ENCODE measurements at regions of chr2 and their contacts with region 1.

Region 1: DNA sequence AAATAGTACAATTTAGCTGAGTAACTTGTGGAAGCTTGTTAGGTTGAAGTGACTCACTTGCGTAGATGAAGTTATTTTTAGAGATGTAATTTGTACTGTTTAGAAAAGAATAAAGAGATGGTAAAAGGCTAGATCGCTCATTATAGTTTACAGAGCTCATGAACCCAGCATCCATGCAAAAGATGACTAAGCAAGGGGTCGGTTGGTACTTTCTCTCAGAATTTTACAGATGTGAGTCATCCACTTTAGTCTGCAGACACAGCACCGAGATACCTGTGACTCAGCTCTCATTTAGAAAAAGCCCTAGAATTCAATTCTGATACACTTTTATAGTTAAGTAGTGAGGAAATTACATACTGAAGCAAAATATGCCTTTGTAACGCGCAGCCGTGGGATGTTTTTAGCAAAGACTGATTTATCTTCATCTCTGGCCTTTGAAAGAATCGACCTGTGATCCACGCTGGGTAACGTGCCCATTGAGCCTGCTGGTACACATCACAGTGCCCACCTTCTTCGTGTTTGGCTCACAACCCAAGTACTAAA is 116.5 kb upstream of the FOSL2 start:
- DNase-seq: no peak
- ATAC-seq: peak; percentile 37 to 47
- H3K4me3 ChIP-seq: no peak overlapping the region
- H3K27ac ChIP-seq: peak overlapping the region; percentile 67 to 85 (median 68)
- H3K4me1 ChIP-seq: peaks cover 27 to 41% of the 10 kb centered on the region in 2 donors
- H3K27me3 ChIP-seq: no peaks in the 10 kb centered on the region
- CTCF ChIP-seq: no peak
- POLR2A ChIP-seq: no peak

Region 2: DNA sequence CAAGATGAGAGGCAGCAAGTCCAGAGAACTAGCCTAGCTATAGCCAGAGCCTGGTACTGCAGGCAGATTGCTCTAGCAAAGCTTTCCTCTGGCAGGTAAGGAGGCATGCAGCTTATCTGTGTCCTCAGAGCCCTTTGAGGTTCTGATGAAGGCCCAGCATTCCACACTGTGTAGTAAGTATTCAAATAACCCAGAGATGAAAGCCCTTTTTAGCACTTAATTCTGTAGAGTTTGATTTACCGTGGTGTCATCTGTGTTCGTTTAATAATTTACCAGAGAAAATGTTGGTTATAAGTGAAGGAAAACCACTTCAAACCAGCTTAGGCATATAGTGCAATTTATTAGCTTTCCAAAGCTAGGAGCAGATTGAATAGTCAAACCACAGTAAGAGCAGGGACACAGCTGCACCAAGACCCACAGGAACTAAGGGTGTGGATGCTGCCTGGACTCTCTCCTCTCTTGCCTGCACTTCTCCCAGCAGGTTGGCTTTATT is 159.0 kb before region 1 on chr2:
- in situ Hi-C with region 1: no loop called
- intact Hi-C with region 1: no loop called
- DNase-seq: no peak
- ATAC-seq: no peak
- H3K4me3 ChIP-seq: no peak overlapping the region
- H3K27ac ChIP-seq: no peak overlapping the region
- H3K4me1 ChIP-seq: peaks cover 21 to 27% of the 10 kb centered on the region in 2 donors
- H3K27me3 ChIP-seq: no peaks in the 10 kb centered on the region
- CTCF ChIP-seq: no peak
- POLR2A ChIP-seq: no peak

Region 3: GRCh38 chr2:28164280-28164801 is 111.8 kb before region 1 on chr2:
- in situ Hi-C with region 1: no loop called
- intact Hi-C with region 1: loop called (anchors 5 kb)
- DNase-seq: peak; percentile 68 to 88
- ATAC-seq: peak; percentile 81 to 86
- H3K4me3 ChIP-seq: peak overlapping the region in 3 of 4 donors; percentile 17 to 25 (median 24)
- H3K27ac ChIP-seq: peak overlapping the region; percentile 89 to 96 (median 92)
- H3K4me1 ChIP-seq: peaks cover 36 to 61% of the 10 kb centered on the region in 2 donors
- H3K27me3 ChIP-seq: no peaks in the 10 kb centered on the region
- CTCF ChIP-seq: no peak
- POLR2A ChIP-seq: peak in 1 of 2 donors; percentile 50

Region 4: GRCh38 chr2:28201671-28202180 is 74.4 kb before region 1 on chr2:
- in situ Hi-C with region 1: no loop called
- intact Hi-C with region 1: loop called (anchors 2 kb)
- DNase-seq: peak; percentile 85 to 93
- ATAC-seq: peak; percentile 92 to 94
- H3K4me3 ChIP-seq: no peak overlapping the region
- H3K27ac ChIP-seq: peak overlapping the region; percentile 75 to 87 (median 82)
- H3K4me1 ChIP-seq: peaks cover 25 to 38% of the 10 kb centered on the region in 2 donors
- H3K27me3 ChIP-seq: no peaks in the 10 kb centered on the region
- CTCF ChIP-seq: no peak
- POLR2A ChIP-seq: peak; percentile 47 to 64

Region 5: DNA sequence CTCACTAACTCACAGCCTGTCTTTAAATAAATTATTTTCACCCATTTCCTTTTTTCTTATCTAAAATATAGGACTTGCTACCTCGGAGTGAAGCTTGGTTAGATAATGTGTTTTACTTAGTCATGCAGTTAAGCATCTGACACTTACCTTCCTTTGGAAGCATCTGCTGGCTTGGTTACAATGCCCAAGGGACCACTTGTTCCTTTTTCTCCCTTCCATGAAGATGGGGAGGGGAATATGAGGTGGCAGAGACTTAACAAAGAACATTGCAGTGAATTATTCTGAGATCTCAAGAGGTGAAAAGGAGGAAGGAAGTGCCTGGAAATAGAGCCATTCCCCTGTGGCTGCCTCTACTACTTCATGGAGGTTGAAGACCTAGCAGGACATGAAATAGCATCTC is 28.9 kb before region 1 on chr2:
- in situ Hi-C with region 1: no loop called
- intact Hi-C with region 1: loop called (anchors 5 kb)
- DNase-seq: no peak
- ATAC-seq: no peak
- H3K4me3 ChIP-seq: no peak overlapping the region
- H3K27ac ChIP-seq: peak overlapping the region in 3 of 4 donors; percentile 0 to 13 (median 12)
- H3K4me1 ChIP-seq: peaks cover 19% of the 10 kb centered on the region in 2 donors
- H3K27me3 ChIP-seq: no peaks in the 10 kb centered on the region
- CTCF ChIP-seq: no peak
- POLR2A ChIP-seq: no peak

Region 6: DNA sequence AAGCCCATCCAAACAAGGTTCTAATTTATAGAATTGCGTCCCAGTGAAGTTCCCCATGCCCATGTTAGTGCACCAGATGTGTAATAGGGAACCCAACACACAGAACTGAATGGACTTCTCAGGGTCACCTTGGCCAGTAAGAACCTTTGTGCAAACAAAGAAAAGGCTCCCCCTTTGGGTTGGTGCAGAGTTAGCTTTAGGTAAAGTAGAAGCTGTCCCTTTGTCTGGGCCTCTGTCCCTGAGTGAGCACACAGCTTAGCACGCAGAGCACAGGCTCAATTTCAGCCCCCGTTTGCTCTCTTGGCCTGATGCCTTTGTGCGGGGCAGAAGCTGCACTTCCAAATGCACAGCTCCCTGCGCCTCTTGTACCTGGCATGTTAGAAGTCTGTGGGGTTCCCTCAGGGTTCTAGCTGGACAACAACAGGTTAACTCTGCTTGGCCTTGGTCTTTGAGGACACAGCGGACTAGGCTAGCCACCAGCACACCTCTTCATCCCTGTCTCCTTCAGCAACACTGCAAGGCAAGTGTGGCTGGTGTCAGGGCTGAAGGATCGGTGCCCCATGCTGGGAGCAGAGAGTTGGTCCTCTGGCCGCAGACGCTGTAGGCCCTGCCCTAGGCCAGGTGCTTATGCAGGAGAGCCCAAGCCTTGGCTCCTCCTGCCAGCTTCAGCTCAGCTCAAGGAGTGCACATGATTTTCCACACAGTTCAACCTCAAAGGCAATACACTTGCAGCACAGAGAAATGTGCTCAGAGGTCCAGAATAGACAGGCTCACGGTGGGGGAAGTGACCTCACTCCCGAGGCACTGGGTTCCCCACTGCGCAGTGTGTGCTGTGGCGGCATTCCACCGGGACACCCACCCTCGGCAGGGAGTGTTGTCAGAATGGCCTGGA is 43.2 kb after region 1 on chr2:
- in situ Hi-C with region 1: no loop called
- intact Hi-C with region 1: loop called (anchors 5 kb)
- DNase-seq: peak; percentile 42 to 72
- ATAC-seq: peak; percentile 87 to 89
- H3K4me3 ChIP-seq: no peak overlapping the region
- H3K27ac ChIP-seq: peak overlapping the region; percentile 76 to 83 (median 80)
- H3K4me1 ChIP-seq: peaks cover 35 to 39% of the 10 kb centered on the region in 2 donors
- H3K27me3 ChIP-seq: no peaks in the 10 kb centered on the region
- CTCF ChIP-seq: no peak
- POLR2A ChIP-seq: peak; percentile 22 to 30

Measured in gastrocnemius medialis (tissue), 4 donors.